IMR-90 (cell line): ENCODE measurements at regions of chr12 and their contacts with region 1.

Region 1: GRCh38 chr12:80186727-80187217 is 87.4 kb downstream of the OTOGL start:
- DNase-seq: peak; percentile 97
- ATAC-seq: peak; percentile 86
- H3K4me3 ChIP-seq: no peak overlapping the region
- H3K27ac ChIP-seq: peak overlapping the region; percentile 77
- H3K4me1 ChIP-seq: peaks cover 17% of the 10 kb centered on the region
- H3K27me3 ChIP-seq: no peaks in the 10 kb centered on the region
- CTCF ChIP-seq: peak; percentile 93
- POLR2A ChIP-seq: peak; percentile 55; the same call in 1 of the 2 replicates
- RAD21 ChIP-seq: peak; percentile 92

Region 2: GRCh38 chr12:79886917-79887519 is 299.8 kb before region 1 on chr12:
- CTCF ChIA-PET with region 1: interaction called, 11 read pairs
- POLR2A ChIA-PET with region 1: no interaction called
- dilution Hi-C with region 1: no loop called
- in situ Hi-C with region 1: loop called (anchors 10 kb)
- intact Hi-C with region 1: loop called (anchors 1 kb)
- DNase-seq: peak; percentile 66
- ATAC-seq: peak; percentile 69
- H3K4me3 ChIP-seq: no peak overlapping the region
- H3K27ac ChIP-seq: no peak overlapping the region
- H3K4me1 ChIP-seq: peaks cover 2% of the 10 kb centered on the region
- H3K27me3 ChIP-seq: no peaks in the 10 kb centered on the region
- CTCF ChIP-seq: peak; percentile 57
- POLR2A ChIP-seq: no peak
- RAD21 ChIP-seq: peak; percentile 60

Region 3: DNA sequence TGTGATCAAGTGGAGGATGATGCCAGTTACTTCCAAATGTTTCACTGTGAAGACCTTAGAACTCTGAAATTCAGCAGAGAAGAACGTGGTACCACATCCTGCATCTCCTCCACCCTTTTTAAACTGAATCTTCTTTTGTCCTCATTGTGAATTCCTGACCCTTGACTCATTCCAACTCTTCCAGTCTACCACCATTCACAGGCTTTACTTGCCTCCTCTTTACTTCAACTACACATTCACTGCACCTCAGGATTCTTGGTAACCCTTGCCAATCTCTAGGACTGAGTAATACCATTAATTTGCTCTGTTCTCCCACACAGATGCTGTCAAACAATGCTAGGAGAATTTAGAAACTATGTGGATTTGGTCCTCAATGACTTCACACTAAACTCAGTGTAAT is 289.2 kb before region 1 on chr12:
- CTCF ChIA-PET with region 1: no interaction called
- POLR2A ChIA-PET with region 1: no interaction called
- dilution Hi-C with region 1: no loop called
- in situ Hi-C with region 1: loop called (anchors 10 kb)
- intact Hi-C with region 1: no loop called
- DNase-seq: peak; percentile 95
- ATAC-seq: peak; percentile 86
- H3K4me3 ChIP-seq: no peak overlapping the region
- H3K27ac ChIP-seq: no peak overlapping the region
- H3K4me1 ChIP-seq: peaks cover 2% of the 10 kb centered on the region; the same call in 1 of the 2 replicates
- H3K27me3 ChIP-seq: no peaks in the 10 kb centered on the region
- CTCF ChIP-seq: no peak
- POLR2A ChIP-seq: no peak
- RAD21 ChIP-seq: no peak

Region 4: DNA sequence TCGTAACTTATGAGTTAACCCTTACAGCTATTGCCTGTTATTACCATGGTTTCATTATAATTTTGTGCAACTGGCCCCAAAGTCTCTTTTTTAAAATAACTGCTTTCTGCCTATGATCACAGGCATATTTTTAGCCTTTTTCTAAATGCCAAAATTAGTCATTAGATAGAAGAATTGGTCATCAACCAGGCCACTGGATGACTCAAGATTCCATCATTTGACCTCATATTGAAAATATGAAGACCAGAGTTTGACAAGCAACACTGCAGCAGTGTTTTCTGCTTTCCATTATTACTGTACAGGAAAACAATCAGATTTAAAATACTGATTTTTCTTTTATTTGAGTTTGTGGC is 142.1 kb before region 1 on chr12:
- CTCF ChIA-PET with region 1: interaction called, 4 read pairs
- POLR2A ChIA-PET with region 1: no interaction called
- dilution Hi-C with region 1: no loop called
- in situ Hi-C with region 1: no loop called
- intact Hi-C with region 1: loop called (anchors 5 kb)
- DNase-seq: peak; percentile 94
- ATAC-seq: peak; percentile 65
- H3K4me3 ChIP-seq: no peak overlapping the region
- H3K27ac ChIP-seq: no peak overlapping the region; the same call in 1 of the 2 replicates
- H3K4me1 ChIP-seq: peaks cover 4% of the 10 kb centered on the region; the same call in 1 of the 2 replicates
- H3K27me3 ChIP-seq: no peaks in the 10 kb centered on the region
- CTCF ChIP-seq: no peak
- POLR2A ChIP-seq: no peak
- RAD21 ChIP-seq: no peak

Region 5: GRCh38 chr12:80422550-80422949 is 235.8 kb after region 1 on chr12:
- CTCF ChIA-PET with region 1: no interaction called
- POLR2A ChIA-PET with region 1: no interaction called
- dilution Hi-C with region 1: no loop called
- in situ Hi-C with region 1: no loop called
- intact Hi-C with region 1: no loop called
- DNase-seq: peak; percentile 89
- ATAC-seq: peak; percentile 80
- H3K4me3 ChIP-seq: no peak overlapping the region
- H3K27ac ChIP-seq: peak overlapping the region; percentile 21; the same call in 1 of the 2 replicates
- H3K4me1 ChIP-seq: peaks cover 2% of the 10 kb centered on the region; the same call in 1 of the 2 replicates
- H3K27me3 ChIP-seq: no peaks in the 10 kb centered on the region
- CTCF ChIP-seq: no peak
- POLR2A ChIP-seq: no peak
- RAD21 ChIP-seq: no peak